ENCODE measurements at regions of chr2 and their contacts with region 1.

Region 1: GRCh38 chr2:162007447-162008040 is 66.5 kb downstream of the DPP4 start:
- DNase-seq: no peak
- H3K4me3 ChIP-seq: no peak overlapping the region
- CTCF ChIP-seq: peak; percentile 5

Region 2: GRCh38 chr2:162018530-162018929 is 11.0 kb after region 1 on chr2:
- CTCF ChIA-PET with region 1: interaction called, 10 read pairs
- POLR2A ChIA-PET with region 1: no interaction called
- DNase-seq: no peak
- H3K4me3 ChIP-seq: no peak overlapping the region
- CTCF ChIP-seq: no peak

Measured in AG04449 (cell line).